ENCODE measurements at regions of chr1 and their contacts with region 1.

Region 1: GRCh38 chr1:66242646-66243547 is 291.1 kb upstream of the SGIP1 start:
- DNase-seq: peak; percentile 74 to 75
- H3K4me3 ChIP-seq: no peak overlapping the region
- H3K4me3 Mint-ChIP-seq: no peak overlapping the region
- H3K27ac Mint-ChIP-seq: no peak overlapping the region
- H3K4me1 ChIP-seq: no peaks in the 10 kb centered on the region
- H3K4me1 Mint-ChIP-seq: no peaks in the 10 kb centered on the region
- H3K27me3 ChIP-seq: no peaks in the 10 kb centered on the region
- H3K27me3 Mint-ChIP-seq: peaks cover 8% of the 10 kb centered on the region
- CTCF ChIP-seq: peak; percentile 84 to 97

Region 2: GRCh38 chr1:65235867-65236805 is 1006.8 kb before region 1 on chr1:
- CTCF ChIA-PET with region 1: no interaction called
- POLR2A ChIA-PET with region 1: no interaction called
- intact Hi-C with region 1: loop called (anchors 5 kb)
- DNase-seq: no peak
- H3K4me3 ChIP-seq: no peak overlapping the region
- H3K4me3 Mint-ChIP-seq: no peak overlapping the region
- H3K27ac Mint-ChIP-seq: no peak overlapping the region
- H3K4me1 ChIP-seq: no peaks in the 10 kb centered on the region
- H3K4me1 Mint-ChIP-seq: no peaks in the 10 kb centered on the region
- H3K27me3 ChIP-seq: no peaks in the 10 kb centered on the region
- H3K27me3 Mint-ChIP-seq: no peaks in the 10 kb centered on the region
- CTCF ChIP-seq: peak in 1 of 2 experiments; percentile 39

Region 3: DNA sequence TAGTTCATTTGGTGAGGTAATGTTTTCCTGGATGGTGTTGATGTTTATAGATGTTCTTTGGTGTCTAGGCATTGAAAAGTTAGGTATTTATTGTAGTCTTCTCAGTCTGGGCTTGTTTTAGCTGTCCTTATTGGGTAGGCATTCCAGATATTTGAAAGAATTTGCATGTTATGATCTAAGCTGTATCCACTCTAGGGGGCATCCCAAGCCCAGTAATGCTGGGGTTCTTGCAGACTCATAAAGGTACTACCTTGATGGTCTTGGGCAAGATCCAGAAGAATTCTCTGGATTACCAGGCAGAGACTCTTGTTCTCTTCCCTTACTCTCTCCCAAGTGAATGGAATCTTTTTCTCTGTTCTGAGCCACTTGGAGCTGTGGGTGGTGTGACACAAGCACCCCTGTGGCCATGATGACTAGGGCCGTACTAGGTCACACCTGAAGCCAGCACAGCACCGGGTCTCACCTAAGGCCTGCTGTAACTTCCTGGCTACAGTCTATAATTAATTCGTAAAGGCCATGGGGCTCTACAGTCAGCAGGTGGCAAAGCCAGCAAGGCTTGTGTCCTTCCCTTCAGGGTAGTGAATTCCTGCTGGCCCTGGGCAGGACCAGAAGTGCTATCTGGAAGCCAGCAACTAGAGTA is 525.0 kb before region 1 on chr1:
- CTCF ChIA-PET with region 1: no interaction called
- POLR2A ChIA-PET with region 1: no interaction called
- intact Hi-C with region 1: loop called (anchors 5 kb)
- DNase-seq: peak in 1 of 2 experiments; percentile 8
- H3K4me3 ChIP-seq: no peak overlapping the region
- H3K4me3 Mint-ChIP-seq: no peak overlapping the region
- H3K27ac Mint-ChIP-seq: no peak overlapping the region
- H3K4me1 ChIP-seq: no peaks in the 10 kb centered on the region
- H3K4me1 Mint-ChIP-seq: no peaks in the 10 kb centered on the region
- H3K27me3 ChIP-seq: no peaks in the 10 kb centered on the region
- H3K27me3 Mint-ChIP-seq: peaks cover 5% of the 10 kb centered on the region
- CTCF ChIP-seq: no peak

Region 4: DNA sequence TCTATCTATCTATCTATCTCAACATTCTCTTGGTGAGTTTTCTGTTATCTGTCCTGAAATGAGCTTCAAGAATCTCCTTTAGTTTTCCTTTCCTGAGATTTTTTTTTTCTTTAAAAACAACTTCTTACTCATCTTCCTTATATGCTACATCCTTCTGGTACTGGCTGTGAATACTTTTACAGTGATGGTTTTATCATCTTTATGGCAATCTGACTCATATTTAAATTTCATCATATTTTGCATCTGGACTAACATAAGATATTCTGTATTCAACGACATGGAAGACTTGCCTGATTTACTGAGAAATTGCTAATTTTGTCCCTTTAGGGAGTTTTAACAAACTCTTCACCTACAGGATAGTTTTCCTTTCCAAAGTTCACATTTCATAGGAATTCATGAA is 417.2 kb before region 1 on chr1:
- CTCF ChIA-PET with region 1: no interaction called
- POLR2A ChIA-PET with region 1: no interaction called
- intact Hi-C with region 1: no loop called
- DNase-seq: no peak
- H3K4me3 ChIP-seq: no peak overlapping the region
- H3K4me3 Mint-ChIP-seq: no peak overlapping the region
- H3K27ac Mint-ChIP-seq: no peak overlapping the region
- H3K4me1 ChIP-seq: no peaks in the 10 kb centered on the region
- H3K4me1 Mint-ChIP-seq: no peaks in the 10 kb centered on the region
- H3K27me3 ChIP-seq: no peaks in the 10 kb centered on the region
- H3K27me3 Mint-ChIP-seq: peaks cover 3% of the 10 kb centered on the region
- CTCF ChIP-seq: no peak

Region 5: DNA sequence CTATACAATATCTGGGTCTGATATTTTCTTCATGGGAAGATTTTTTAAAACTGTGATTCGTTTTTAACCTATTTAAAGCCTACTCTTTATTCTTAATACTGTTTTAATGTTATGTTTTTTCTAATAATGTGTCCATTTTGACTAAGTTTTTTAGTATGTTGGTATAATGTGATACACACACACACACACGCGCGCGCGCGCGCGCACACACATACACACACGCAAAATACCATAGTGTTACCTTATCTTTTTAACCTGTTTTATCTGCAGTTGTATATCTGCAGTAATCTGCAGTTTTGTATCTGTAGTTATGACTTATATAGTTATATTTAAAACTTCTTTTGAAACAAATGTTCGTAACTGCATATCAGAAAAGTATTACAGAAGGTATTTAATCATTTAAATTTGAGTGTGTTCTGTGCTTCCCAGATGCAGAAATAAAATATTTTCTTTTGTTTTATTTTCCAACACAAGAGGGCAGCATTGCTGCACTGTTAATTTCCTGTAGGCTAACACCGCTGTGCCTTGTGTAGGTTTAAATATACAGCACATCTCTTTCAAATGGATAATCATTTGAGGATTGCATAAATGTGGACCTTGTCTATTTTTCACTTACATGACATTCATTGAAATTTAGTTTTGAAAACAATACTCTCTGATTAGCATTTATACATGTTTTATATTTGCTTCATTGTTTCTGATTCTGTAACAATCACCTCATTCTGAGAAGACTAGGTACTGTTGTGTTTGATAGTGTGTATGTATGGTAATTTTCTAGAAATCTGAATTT is 284.1 kb before region 1 on chr1:
- CTCF ChIA-PET with region 1: interaction called, 3 read pairs
- POLR2A ChIA-PET with region 1: no interaction called
- intact Hi-C with region 1: loop called (anchors 1 kb)
- DNase-seq: peak in 1 of 2 experiments; percentile 45
- H3K4me3 ChIP-seq: no peak overlapping the region
- H3K4me3 Mint-ChIP-seq: no peak overlapping the region
- H3K27ac Mint-ChIP-seq: no peak overlapping the region
- H3K4me1 ChIP-seq: no peaks in the 10 kb centered on the region
- H3K4me1 Mint-ChIP-seq: no peaks in the 10 kb centered on the region
- H3K27me3 ChIP-seq: no peaks in the 10 kb centered on the region
- H3K27me3 Mint-ChIP-seq: peaks cover 2% of the 10 kb centered on the region
- CTCF ChIP-seq: peak in 1 of 2 experiments; percentile 37

Region 6: GRCh38 chr1:66050123-66050522 is 192.8 kb before region 1 on chr1:
- CTCF ChIA-PET with region 1: no interaction called
- POLR2A ChIA-PET with region 1: no interaction called
- intact Hi-C with region 1: loop called (anchors 10 kb)
- DNase-seq: no peak
- H3K4me3 ChIP-seq: no peak overlapping the region
- H3K4me3 Mint-ChIP-seq: no peak overlapping the region
- H3K27ac Mint-ChIP-seq: no peak overlapping the region
- H3K4me1 ChIP-seq: no peaks in the 10 kb centered on the region
- H3K4me1 Mint-ChIP-seq: no peaks in the 10 kb centered on the region
- H3K27me3 ChIP-seq: no peaks in the 10 kb centered on the region
- H3K27me3 Mint-ChIP-seq: peaks cover 7% of the 10 kb centered on the region
- CTCF ChIP-seq: no peak

Region 7: GRCh38 chr1:66294692-66295384 is 51.9 kb after region 1 on chr1:
- CTCF ChIA-PET with region 1: no interaction called
- POLR2A ChIA-PET with region 1: no interaction called
- intact Hi-C with region 1: no loop called
- DNase-seq: no peak
- H3K4me3 ChIP-seq: no peak overlapping the region
- H3K4me3 Mint-ChIP-seq: no peak overlapping the region
- H3K27ac Mint-ChIP-seq: no peak overlapping the region
- H3K4me1 ChIP-seq: no peaks in the 10 kb centered on the region
- H3K4me1 Mint-ChIP-seq: no peaks in the 10 kb centered on the region
- H3K27me3 ChIP-seq: no peaks in the 10 kb centered on the region
- H3K27me3 Mint-ChIP-seq: no peaks in the 10 kb centered on the region
- CTCF ChIP-seq: no peak

Region 8: DNA sequence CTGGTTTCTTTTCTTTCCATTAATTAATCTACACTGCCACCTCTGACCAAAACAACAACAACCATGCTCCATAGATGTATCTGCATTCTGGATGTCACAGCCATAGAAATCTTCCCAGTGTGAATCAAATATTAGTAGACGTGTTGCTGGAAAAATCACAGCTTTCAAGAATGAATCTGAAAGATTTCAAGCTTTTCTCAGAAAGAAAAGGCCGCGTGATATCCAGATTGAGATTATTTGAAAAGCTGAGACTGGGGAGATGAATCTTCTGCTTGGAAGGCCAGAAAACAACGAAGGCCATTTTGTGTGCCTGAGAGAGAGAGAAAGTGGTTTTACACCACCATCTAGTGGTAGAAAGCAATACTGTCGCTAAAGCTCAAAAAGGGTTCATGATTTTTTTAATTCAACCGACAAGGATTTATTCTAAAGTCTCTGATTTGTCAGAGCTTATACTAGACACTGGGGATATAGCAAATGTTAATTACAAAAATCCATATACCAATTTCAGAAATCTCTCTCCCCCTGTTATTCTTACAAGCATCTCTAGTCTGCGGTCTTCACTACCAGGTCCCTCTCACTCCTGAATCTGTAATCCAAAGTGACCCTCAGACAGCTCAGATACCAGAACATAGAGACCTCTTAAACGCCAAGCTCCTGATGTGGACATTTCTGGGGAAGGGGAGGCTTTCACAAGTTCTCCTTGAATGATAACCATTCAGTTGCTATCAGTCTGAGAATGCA is 203.5 kb after region 1 on chr1:
- CTCF ChIA-PET with region 1: interaction called, 11 read pairs
- POLR2A ChIA-PET with region 1: no interaction called
- intact Hi-C with region 1: no loop called
- DNase-seq: peak in 1 of 2 experiments; percentile 39
- H3K4me3 ChIP-seq: no peak overlapping the region
- H3K4me3 Mint-ChIP-seq: no peak overlapping the region
- H3K27ac Mint-ChIP-seq: no peak overlapping the region
- H3K4me1 ChIP-seq: no peaks in the 10 kb centered on the region
- H3K4me1 Mint-ChIP-seq: peaks cover 8% of the 10 kb centered on the region
- H3K27me3 ChIP-seq: no peaks in the 10 kb centered on the region
- H3K27me3 Mint-ChIP-seq: peaks cover 8% of the 10 kb centered on the region
- CTCF ChIP-seq: peak; percentile 47 to 56